B cell (primary cell): ENCODE measurements at regions of chr13 and their contacts with region 1.

Region 1: DNA sequence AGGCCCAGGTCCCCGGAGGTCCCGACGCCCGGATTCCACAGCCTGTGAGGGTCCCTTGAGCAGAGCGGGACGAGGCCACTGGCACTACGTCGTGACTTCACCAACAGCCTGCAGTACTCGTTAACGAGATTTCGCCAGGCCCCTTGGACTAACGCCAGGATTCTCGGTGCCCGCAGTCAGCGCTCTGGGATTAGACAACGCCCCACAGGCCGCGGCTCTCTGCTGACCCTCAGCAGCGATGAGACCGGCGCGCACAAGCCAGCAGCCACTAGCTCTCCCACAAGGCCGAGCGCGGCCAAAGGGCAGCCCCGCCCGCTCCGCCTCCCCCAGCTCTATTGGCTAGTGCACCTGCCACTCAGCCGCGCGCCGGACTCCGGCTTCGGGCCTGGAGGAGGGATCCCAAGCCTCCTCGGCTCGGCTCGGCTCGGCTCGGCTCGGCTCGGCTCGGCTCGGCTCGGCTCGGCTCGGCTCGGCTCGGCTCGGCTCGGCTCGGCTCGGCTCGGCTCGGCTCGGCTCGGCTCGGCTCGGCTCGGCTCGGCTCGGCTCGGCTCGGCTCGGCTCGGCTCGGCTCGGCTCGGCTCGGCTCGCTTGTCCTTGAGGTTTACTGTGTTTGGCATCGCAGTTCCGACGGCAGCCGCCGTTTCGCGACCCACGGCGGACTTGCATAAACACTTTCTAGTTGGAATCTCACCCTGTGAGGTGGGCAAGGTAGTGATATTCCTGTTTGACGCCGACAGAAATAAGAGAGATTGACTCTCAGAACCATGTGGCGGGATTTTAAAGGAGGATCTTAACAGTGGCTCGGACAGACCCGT is 231.7 kb upstream of the SERP2 start:
- DNase-seq: peak; percentile 97
- ATAC-seq: peak; percentile 99
- H3K4me3 ChIP-seq: peak overlapping the region; percentile 69 to 91 (median 81)
- H3K4me3 Mint-ChIP-seq: peak overlapping the region; percentile 96
- H3K27ac ChIP-seq: peak overlapping the region; percentile 77 to 93
- H3K27ac Mint-ChIP-seq: peak overlapping the region; percentile 94
- H3K4me1 ChIP-seq: peaks cover 22 to 26% of the 10 kb centered on the region in 2 donors
- H3K4me1 Mint-ChIP-seq: peaks cover 28% of the 10 kb centered on the region
- H3K27me3 ChIP-seq: no peaks in the 10 kb centered on the region
- H3K27me3 Mint-ChIP-seq: peaks cover 7% of the 10 kb centered on the region
- CTCF ChIP-seq: no peak

Region 2: DNA sequence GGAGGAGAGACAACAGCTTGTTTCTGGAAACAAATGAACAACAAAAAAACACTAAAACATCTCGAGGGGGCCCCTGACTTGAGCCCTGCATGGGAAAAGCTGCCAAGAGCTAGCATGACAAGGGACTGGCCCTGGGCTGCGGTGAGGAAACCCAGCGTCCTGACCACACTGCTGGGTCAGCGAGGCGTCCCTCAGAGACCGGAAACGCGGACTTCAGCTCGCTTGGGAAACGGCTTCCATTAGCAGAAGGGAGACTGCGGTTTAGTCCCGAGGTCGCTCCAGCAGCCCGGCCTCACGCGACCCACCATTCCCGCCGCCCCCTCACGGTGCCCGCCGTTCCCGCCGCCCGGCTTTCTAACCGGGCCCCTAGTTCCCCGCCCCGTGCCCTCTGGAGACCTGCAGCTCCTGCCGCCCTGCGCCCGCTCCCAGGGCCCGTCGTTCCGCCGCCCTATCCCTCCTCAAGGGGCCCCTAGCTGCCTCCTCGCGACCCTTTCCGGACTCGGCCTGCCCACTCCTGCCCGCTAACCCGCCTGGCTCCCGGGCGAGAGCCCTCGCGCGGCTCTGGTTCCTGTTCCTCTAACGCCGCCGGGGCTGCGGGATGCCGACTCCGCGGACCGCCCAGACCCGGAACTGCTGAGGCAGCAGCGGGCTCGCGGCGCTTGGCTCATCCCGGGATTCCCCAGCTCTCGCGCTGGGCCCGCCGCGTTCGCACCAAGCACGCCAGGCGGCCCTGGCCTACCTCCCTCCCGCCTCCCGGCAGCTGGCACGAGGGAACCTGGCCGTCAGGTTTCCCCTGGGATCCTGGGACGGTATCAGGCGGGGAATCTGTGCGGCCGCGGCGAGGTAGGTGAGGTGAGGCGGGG is 262.8 kb before region 1 on chr13 and contains the start of gene CCDC122:
- CTCF ChIA-PET with region 1: no interaction called
- POLR2A ChIA-PET with region 1: interaction called, 3 read pairs
- intact Hi-C with region 1: loop called (anchors 5 kb)
- DNase-seq: peak; percentile 89
- ATAC-seq: peak; percentile 79
- H3K4me3 ChIP-seq: peak within 1 kb of the TSS; percentile 36 to 78 (median 75)
- H3K4me3 Mint-ChIP-seq: peak within 1 kb of the TSS; percentile 88
- H3K27ac ChIP-seq: peak within 1 kb of the TSS; percentile 76 to 92
- H3K27ac Mint-ChIP-seq: peak within 1 kb of the TSS; percentile 94
- H3K4me1 ChIP-seq: peaks cover 20 to 22% of the 10 kb centered on the region in 2 donors
- H3K4me1 Mint-ChIP-seq: peaks cover 31% of the 10 kb centered on the region
- H3K27me3 ChIP-seq: no peaks in the 10 kb centered on the region
- H3K27me3 Mint-ChIP-seq: no peaks in the 10 kb centered on the region
- CTCF ChIP-seq: no peak
- total RNA-seq, gene CCDC122: 10.7 and 12.1 TPM in 2 replicates

Region 3: DNA sequence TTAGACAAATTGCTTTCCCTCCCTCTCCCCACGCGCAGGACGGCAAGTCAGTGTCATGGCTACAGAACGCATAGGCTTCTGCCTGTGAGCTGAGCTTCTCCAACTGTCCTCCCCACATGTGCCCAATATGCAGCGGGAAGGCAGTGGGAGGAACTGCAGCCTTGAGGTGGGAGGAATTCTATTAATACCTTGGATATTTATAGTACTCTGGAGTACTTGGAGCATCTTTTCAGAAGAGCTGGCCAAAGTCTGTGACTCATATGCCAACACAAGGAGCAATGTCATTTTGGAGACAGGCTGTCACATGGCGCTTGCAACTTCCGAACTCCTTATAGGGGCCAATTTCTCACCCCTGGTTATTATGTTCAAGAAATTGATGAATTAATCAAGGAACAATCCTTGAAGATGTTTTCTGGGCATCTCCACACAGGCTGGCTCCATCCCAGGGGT is 13.4 kb before region 1 on chr13:
- CTCF ChIA-PET with region 1: no interaction called
- POLR2A ChIA-PET with region 1: no interaction called
- intact Hi-C with region 1: no loop called
- DNase-seq: no peak
- ATAC-seq: no peak
- H3K4me3 ChIP-seq: no peak overlapping the region
- H3K4me3 Mint-ChIP-seq: no peak overlapping the region
- H3K27ac ChIP-seq: no peak overlapping the region
- H3K27ac Mint-ChIP-seq: no peak overlapping the region
- H3K4me1 ChIP-seq: no peaks in the 10 kb centered on the region
- H3K4me1 Mint-ChIP-seq: no peaks in the 10 kb centered on the region
- H3K27me3 ChIP-seq: peaks cover 0 to 3% (median 0%) of the 10 kb centered on the region in 4 experiments
- H3K27me3 Mint-ChIP-seq: peaks cover 13% of the 10 kb centered on the region
- CTCF ChIP-seq: no peak

Region 4: DNA sequence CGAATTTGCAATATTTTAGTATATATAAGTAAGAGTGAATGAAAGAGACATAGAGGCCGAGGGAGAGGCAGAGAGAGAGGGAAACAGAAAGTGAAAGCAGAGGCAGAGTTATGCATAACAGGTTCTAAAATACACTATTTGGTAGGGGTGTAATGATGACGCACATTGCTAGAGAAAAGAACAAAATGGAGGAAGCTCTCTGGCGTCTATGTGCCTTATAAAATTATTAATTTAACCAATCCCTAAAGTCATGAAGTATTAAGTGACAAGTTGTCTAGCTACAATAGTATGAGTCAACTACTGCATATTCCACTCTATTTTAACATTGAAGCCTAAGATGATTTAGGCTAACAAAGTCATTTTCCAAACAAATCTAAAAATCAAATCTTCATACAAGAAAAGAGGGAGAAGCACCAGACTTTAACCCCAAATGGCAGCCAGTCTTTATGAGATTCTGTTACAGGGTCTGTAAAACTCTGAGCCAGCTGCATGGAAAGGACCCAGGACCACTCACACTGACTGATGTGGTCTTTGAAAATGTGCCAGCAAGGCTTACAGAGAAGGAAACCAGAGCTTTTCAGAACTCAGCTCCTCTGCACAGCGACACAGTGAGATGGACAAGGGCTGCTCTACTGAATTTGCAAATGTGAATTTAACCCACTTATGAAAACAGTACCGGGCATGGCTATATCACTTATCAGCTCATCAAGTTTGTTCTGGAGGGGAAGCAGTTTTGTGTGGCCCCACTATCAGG is 132.7 kb after region 1 on chr13:
- CTCF ChIA-PET with region 1: no interaction called
- POLR2A ChIA-PET with region 1: no interaction called
- intact Hi-C with region 1: loop called (anchors 5 kb)
- DNase-seq: peak; percentile 82
- ATAC-seq: peak; percentile 84
- H3K4me3 ChIP-seq: peak overlapping the region in 3 of 5 experiments; percentile 31 to 38 (median 35)
- H3K4me3 Mint-ChIP-seq: peak overlapping the region; percentile 65
- H3K27ac ChIP-seq: peak overlapping the region; percentile 74 to 83
- H3K27ac Mint-ChIP-seq: peak overlapping the region; percentile 85
- H3K4me1 ChIP-seq: peaks cover 29 to 44% of the 10 kb centered on the region in 2 donors
- H3K4me1 Mint-ChIP-seq: peaks cover 40% of the 10 kb centered on the region
- H3K27me3 ChIP-seq: no peaks in the 10 kb centered on the region
- H3K27me3 Mint-ChIP-seq: no peaks in the 10 kb centered on the region
- CTCF ChIP-seq: no peak

Region 5: GRCh38 chr13:44786756-44787155 is 644.8 kb after region 1 on chr13:
- CTCF ChIA-PET with region 1: no interaction called
- POLR2A ChIA-PET with region 1: no interaction called
- intact Hi-C with region 1: no loop called
- DNase-seq: no peak
- ATAC-seq: no peak
- H3K4me3 ChIP-seq: no peak overlapping the region
- H3K4me3 Mint-ChIP-seq: no peak overlapping the region
- H3K27ac ChIP-seq: no peak overlapping the region
- H3K27ac Mint-ChIP-seq: no peak overlapping the region
- H3K4me1 ChIP-seq: no peaks in the 10 kb centered on the region
- H3K4me1 Mint-ChIP-seq: no peaks in the 10 kb centered on the region
- H3K27me3 ChIP-seq: peaks cover 0 to 2% (median 0%) of the 10 kb centered on the region in 4 experiments
- H3K27me3 Mint-ChIP-seq: peaks cover 4% of the 10 kb centered on the region
- CTCF ChIP-seq: no peak